CD8-positive, alpha-beta memory T cell (primary cell): ENCODE measurements at regions of chr6 and their contacts with region 1.

Region 1: DNA sequence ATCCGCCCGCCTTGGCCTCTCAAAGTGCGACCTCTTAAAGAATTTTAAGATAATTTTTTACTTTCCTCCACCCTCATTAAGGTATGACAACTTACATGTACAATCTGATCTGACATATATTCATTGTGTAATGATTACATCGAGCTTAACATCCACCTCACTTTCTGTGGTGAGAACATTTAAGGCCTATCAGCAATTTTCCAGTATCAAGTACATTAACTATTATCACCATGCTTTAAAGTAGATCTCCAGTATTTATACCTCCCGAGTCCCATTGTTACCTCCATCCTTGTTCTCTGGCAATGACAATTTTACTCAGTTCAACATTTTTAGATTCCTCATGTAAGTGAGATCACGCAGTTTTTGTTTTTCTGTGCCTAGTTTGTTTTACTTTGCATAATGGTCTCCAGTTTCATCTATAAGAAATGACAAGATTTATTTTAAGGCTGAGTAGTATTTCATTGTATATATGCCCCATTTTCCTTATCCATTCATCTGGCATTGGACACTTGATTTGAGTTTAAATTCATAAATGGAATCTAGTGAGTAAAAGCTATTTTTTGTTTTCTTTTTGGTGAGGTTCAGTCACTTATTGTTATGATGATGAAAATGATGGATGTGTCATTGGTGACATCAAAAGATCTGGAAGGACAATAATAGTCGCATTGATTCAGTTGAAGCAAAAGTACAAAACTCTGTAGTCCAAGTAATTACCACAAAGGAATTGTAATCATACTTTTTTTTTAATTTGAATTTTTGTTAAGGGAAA is 87.0 kb downstream of the OR2B2 start:
- DNase-seq: no peak
- H3K4me3 ChIP-seq: peak overlapping the region; percentile 91
- H3K4me3 Mint-ChIP-seq: peak overlapping the region; percentile 82 to 97 (median 90)
- H3K27ac ChIP-seq: peak overlapping the region; percentile 96
- H3K27ac Mint-ChIP-seq: peak overlapping the region; percentile 93 to 100 (median 98)
- H3K4me1 ChIP-seq: peaks cover 14% of the 10 kb centered on the region
- H3K4me1 Mint-ChIP-seq: peaks cover 31 to 42% (median 38%) of the 10 kb centered on the region in 3 donors
- H3K27me3 ChIP-seq: no peaks in the 10 kb centered on the region
- H3K27me3 Mint-ChIP-seq: no peaks in the 10 kb centered on the region

Region 2: DNA sequence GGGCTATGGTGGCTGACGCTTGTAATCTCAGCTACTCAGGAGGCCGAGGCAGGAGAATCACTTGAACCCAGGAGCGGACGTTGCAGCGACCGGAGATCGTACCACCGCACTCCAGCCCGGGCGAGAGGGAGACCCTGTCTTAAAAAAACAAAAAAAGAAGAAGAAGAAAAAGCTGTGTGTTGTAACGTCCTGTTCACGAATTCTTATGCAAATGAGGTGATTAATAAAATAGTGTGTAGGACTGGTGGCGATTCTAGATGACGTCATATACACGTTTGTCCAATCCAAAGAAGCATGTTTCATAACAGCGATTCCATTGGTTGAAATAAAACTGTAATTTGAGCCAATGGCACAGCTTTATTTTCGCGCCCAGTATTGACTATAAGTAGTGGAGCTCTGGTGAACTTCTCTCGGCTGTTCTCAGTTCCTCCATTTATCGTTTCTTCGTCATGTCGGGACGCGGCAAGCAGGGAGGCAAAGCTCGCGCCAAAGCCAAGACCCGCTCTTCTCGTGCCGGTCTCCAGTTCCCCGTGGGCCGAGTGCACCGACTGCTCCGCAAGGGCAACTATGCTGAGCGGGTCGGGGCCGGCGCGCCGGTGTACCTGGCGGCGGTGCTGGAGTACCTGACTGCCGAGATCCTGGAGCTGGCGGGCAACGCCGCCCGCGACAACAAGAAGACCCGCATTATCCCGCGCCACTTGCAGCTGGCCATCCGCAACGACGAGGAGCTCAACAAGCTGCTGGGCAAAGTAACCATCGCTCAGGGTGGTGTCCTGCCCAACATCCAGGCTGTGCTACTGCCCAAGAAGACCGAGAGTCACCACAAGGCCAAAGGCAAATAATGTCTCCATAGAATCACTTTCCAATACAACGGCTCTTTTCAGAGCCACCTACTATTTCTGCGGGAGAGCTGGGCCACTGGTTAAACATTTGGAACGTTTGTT is 40.0 kb after region 1 on chr6:
- CTCF ChIA-PET with region 1: interaction called, 11 read pairs
- POLR2A ChIA-PET with region 1: interaction called, 73 read pairs
- DNase-seq: peak; percentile 42 to 89 (median 81)
- H3K4me3 ChIP-seq: peak overlapping the region; percentile 63
- H3K4me3 Mint-ChIP-seq: peak overlapping the region; percentile 93 to 99 (median 96)
- H3K27ac ChIP-seq: peak overlapping the region; percentile 83
- H3K27ac Mint-ChIP-seq: peak overlapping the region; percentile 87 to 99 (median 97)
- H3K4me1 ChIP-seq: peaks cover 25% of the 10 kb centered on the region
- H3K4me1 Mint-ChIP-seq: peaks cover 36 to 50% (median 45%) of the 10 kb centered on the region in 3 donors
- H3K27me3 ChIP-seq: no peaks in the 10 kb centered on the region
- H3K27me3 Mint-ChIP-seq: no peaks in the 10 kb centered on the region

Region 3: GRCh38 chr6:27922949-27923348 is 97.7 kb after region 1 on chr6:
- CTCF ChIA-PET with region 1: no interaction called
- POLR2A ChIA-PET with region 1: no interaction called
- DNase-seq: no peak
- H3K4me3 ChIP-seq: no peak overlapping the region
- H3K4me3 Mint-ChIP-seq: no peak overlapping the region
- H3K27ac ChIP-seq: no peak overlapping the region
- H3K27ac Mint-ChIP-seq: peak overlapping the region in 1 of 8 donors; percentile 12
- H3K4me1 ChIP-seq: no peaks in the 10 kb centered on the region
- H3K4me1 Mint-ChIP-seq: no peaks in the 10 kb centered on the region
- H3K27me3 ChIP-seq: peaks cover 6% of the 10 kb centered on the region
- H3K27me3 Mint-ChIP-seq: peaks cover 23 to 33% of the 10 kb centered on the region in 2 donors